ENCODE measurements at regions of chr3 and their contacts with region 1.

Region 1: DNA sequence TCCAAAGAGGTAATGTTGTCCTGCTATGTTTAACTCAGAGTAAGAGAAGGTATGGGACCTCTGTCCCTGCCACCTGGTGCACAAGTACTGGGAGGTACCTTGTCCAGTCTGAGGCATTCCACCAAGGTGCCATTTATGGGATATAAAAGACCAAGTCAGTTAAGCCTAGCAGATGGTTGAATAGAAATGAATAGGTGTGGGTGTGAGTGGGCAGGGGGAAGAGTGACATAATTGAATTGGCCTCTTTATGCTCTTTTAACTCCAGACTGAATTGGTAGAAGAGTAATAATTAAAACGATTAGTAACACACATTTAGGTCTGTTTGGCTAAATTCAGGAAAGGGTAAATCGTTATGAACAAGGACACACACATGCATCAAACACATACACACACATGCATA is 562 bp downstream of the ADGRG7 start:
- DNase-seq: no peak
- H3K4me3 ChIP-seq: no peak overlapping the region
- H3K27ac ChIP-seq: no peak overlapping the region
- H3K27me3 ChIP-seq: peaks cover 0 to 64% (median 14%) of the 10 kb centered on the region in 45 donors
- CTCF ChIP-seq: no peak

Region 2: GRCh38 chr3:100563732-100564131 is 46.2 kb before region 1 on chr3:
- intact Hi-C with region 1: loop called in 1 of 2 experiments (anchors 2 kb)
- DNase-seq: no peak
- H3K4me3 ChIP-seq: no peak overlapping the region
- H3K27ac ChIP-seq: no peak overlapping the region
- H3K27me3 ChIP-seq: no peaks in the 10 kb centered on the region
- CTCF ChIP-seq: no peak

Region 3: GRCh38 chr3:100629421-100630127 is 19.6 kb after region 1 on chr3:
- intact Hi-C with region 1: no loop called
- DNase-seq: no peak
- H3K4me3 ChIP-seq: no peak overlapping the region
- H3K27ac ChIP-seq: no peak overlapping the region
- H3K27me3 ChIP-seq: peaks cover 0 to 6% (median 0%) of the 10 kb centered on the region in 45 donors
- CTCF ChIP-seq: no peak

Measured in dorsolateral prefrontal cortex (tissue), 120 donors.